GM10248 (cell line): ENCODE measurements at regions of chr4 and their contacts with region 1.

Region 1: DNA sequence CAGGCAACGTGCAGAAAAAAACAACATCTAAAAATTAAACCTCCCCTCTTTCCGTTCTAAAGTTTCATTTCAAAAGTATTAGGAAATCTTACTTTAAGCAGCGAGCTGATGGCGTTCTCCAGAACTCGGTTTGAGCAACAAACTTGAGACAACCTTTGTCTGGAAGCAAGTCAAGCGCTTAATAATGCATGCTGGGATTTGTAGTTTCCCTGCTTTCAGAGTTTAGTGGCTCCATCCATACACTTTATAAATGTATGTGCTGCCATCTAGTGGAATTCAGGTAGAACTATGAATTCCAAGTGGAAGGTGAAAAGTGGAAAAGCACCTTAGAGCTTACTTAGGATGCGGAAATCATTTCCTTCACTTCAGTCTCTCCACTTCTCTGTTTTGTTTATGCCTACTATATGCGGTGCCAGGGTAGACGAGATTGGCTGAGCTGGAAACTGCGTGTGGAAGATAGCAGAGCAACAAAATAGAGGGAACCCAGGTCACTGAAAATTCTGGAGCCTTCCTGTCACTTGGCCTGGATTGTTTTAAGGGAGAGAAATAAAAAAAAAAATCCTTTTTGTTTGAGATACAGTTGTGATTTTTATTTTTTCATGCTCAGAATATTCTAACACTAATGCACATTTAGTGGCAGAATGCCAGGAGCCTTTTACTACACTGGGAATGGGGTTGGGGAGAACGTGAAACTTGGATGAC is at the start of gene BDH2:
- DNase-seq: peak; percentile 83
- CTCF ChIP-seq: peak; percentile 60

Region 2: DNA sequence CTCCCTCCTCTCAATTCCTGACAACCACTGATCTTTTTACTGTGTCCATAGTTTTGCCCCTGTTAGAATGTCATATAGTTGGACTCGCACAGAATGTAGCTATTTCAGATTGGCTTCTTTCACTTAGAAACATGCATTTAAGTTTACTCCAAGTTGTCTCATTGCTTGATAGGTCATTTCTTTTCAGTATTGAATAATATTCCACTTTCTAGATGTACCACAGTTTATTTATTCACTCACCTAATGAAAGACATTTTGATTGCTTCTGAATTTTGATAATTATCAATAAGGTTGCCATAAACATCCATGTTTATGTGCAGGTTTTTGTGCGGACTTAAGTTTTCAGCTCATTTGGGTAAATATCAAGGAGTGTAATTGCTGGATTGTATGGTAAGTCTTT is 118.8 kb before region 1 on chr4:
- CTCF ChIA-PET with region 1: no interaction called
- POLR2A ChIA-PET with region 1: no interaction called
- DNase-seq: no peak
- CTCF ChIP-seq: no peak

Region 3: GRCh38 chr4:103075901-103076739 is 23.7 kb before region 1 on chr4:
- CTCF ChIA-PET with region 1: interaction called, 128 read pairs
- POLR2A ChIA-PET with region 1: no interaction called
- DNase-seq: peak; percentile 70
- CTCF ChIP-seq: no peak

Region 4: GRCh38 chr4:103111598-103111997 is 11.8 kb after region 1 on chr4:
- CTCF ChIA-PET with region 1: interaction called, 15 read pairs
- POLR2A ChIA-PET with region 1: no interaction called
- DNase-seq: no peak
- CTCF ChIP-seq: no peak